Naive thymus-derived CD4-positive, alpha-beta T cell (primary cell): ENCODE measurements at regions of chr6 and their contacts with region 1.

Region 1: DNA sequence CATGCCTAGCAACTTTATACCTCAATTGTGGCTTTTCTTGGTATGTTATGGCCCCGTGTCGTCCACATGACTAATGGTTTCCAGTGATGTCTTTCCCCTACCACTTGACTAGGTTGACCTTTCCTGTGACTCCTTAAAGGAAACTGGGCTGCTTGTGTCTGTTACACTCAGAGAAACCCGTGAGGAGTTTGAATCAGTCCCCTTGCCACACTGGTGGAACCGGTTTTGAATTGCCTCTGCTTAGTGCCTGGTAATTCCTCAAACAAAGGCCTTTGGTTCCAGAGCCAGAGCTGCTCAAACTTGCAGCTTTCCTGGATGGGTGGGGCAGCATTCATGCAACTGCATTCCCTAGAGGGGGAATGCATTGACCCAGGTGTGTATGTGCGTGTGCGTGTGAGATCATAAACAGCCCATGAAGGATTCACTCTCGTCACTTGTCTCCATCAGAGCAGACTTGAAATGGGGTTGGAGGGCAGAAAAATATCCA is 22.0 kb downstream of the ECT2L start:
- DNase-seq: peak in 1 of 9 donors; percentile 28
- ATAC-seq: no peak
- H3K4me3 ChIP-seq: no peak overlapping the region
- H3K4me3 Mint-ChIP-seq: no peak overlapping the region
- H3K27ac ChIP-seq: no peak overlapping the region
- H3K27ac Mint-ChIP-seq: peak overlapping the region in 1 of 9 donors; percentile 21
- H3K4me1 ChIP-seq: no peaks in the 10 kb centered on the region
- H3K4me1 Mint-ChIP-seq: peaks cover 0 to 30% (median 0%) of the 10 kb centered on the region in 7 donors
- H3K27me3 ChIP-seq: no peaks in the 10 kb centered on the region
- H3K27me3 Mint-ChIP-seq: no peaks in the 10 kb centered on the region

Region 2: DNA sequence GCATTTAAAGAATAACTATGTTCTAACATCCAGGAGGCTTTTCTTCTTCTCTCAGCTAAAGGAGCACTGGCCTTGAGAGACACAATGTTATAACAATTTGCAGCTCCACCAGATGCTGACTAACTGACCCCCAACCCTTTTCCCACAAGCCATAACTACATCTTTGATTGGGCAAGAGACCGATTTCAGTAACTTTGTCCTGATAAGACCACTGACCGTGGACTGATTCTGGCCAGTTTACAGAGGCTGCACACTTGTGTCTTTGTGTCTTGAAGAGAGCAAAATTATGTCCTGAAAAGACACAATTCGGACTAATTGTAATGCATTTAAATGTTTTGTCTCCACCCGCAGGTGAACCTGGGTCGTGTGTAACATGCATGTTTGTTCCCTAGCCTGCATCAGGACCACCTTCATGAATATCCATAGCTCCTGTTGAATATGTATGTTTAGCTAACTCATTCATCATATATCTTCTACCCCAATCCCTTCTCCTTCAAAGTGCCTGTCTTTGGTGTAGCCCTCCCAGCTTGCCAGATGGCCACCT is 233.0 kb after region 1 on chr6:
- CTCF ChIA-PET with region 1: no interaction called
- POLR2A ChIA-PET with region 1: no interaction called
- intact Hi-C with region 1: loop called in 1 of 2 experiments (anchors 1 kb)
- DNase-seq: no peak
- ATAC-seq: no peak
- H3K4me3 ChIP-seq: no peak overlapping the region
- H3K4me3 Mint-ChIP-seq: no peak overlapping the region
- H3K27ac ChIP-seq: no peak overlapping the region
- H3K27ac Mint-ChIP-seq: no peak overlapping the region
- H3K4me1 ChIP-seq: no peaks in the 10 kb centered on the region
- H3K4me1 Mint-ChIP-seq: peaks cover 0 to 16% (median 4%) of the 10 kb centered on the region in 7 donors
- H3K27me3 ChIP-seq: no peaks in the 10 kb centered on the region
- H3K27me3 Mint-ChIP-seq: peaks cover 0 to 7% (median 0%) of the 10 kb centered on the region in 5 donors

Region 3: GRCh38 chr6:139124887-139125672 is 307.2 kb after region 1 on chr6:
- CTCF ChIA-PET with region 1: no interaction called
- POLR2A ChIA-PET with region 1: no interaction called
- intact Hi-C with region 1: loop called (anchors 1 to 5 kb)
- DNase-seq: peak in 8 of 9 donors; percentile 65 to 90 (median 84)
- ATAC-seq: peak; percentile 99
- H3K4me3 ChIP-seq: peak overlapping the region; percentile 31
- H3K4me3 Mint-ChIP-seq: peak overlapping the region; percentile 25 to 86 (median 68)
- H3K27ac ChIP-seq: peak overlapping the region; percentile 60
- H3K27ac Mint-ChIP-seq: peak overlapping the region; percentile 86 to 97 (median 94)
- H3K4me1 ChIP-seq: peaks cover 28 to 38% of the 10 kb centered on the region in 2 donors
- H3K4me1 Mint-ChIP-seq: peaks cover 19 to 65% (median 60%) of the 10 kb centered on the region in 7 donors
- H3K27me3 ChIP-seq: no peaks in the 10 kb centered on the region
- H3K27me3 Mint-ChIP-seq: no peaks in the 10 kb centered on the region

Region 4: DNA sequence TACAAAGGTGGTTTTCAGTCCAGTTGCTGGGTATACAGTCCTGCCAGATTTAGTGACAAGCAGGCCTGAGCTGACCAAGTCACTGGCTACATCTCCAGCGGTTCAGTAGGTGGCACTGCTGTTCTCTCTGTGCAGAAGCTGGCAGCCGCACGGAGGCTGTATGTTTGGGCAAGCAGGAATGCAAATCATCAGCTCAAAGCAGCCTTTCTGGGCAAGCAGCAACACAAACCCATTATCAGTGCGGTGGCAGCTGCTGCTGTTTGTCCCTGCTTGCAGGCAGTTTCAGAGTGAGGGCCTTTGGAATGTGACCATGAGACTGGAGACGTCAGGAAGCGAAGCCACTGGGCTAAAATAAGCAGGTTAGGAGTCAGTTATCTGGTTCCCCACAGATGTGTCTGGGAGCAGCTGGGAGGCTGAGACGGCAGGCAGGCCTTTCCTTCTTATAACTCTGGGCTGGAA is 401.4 kb after region 1 on chr6:
- CTCF ChIA-PET with region 1: interaction called, 6 read pairs
- POLR2A ChIA-PET with region 1: interaction called, 3 read pairs
- intact Hi-C with region 1: loop called (anchors 1 kb)
- DNase-seq: peak; percentile 39 to 76 (median 60)
- ATAC-seq: peak; percentile 100
- H3K4me3 ChIP-seq: no peak overlapping the region
- H3K4me3 Mint-ChIP-seq: peak overlapping the region in 8 of 10 donors; percentile 41 to 68 (median 58)
- H3K27ac ChIP-seq: no peak overlapping the region
- H3K27ac Mint-ChIP-seq: peak overlapping the region; percentile 49 to 92 (median 78)
- H3K4me1 ChIP-seq: peaks cover 5 to 10% of the 10 kb centered on the region in 2 donors
- H3K4me1 Mint-ChIP-seq: peaks cover 6 to 20% (median 12%) of the 10 kb centered on the region in 7 donors
- H3K27me3 ChIP-seq: no peaks in the 10 kb centered on the region
- H3K27me3 Mint-ChIP-seq: no peaks in the 10 kb centered on the region

Region 5: DNA sequence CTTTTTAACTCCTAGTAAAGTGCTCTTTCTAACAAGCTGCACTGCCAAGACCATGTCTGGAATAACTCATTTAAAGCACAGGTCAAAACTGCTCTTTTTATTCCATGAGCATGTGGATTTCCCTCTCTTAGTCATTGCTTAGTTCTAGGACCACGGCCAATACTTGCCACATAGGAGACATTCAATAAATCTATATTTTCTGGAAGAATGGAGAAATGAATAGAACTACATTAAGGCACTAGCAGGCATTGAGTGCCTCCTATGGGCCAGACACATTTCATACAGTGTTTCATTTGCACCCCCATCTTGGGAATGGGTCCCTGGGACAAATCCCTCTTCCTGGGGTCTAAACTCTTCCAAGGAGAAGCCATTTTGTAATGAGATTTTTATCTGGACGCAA is 1109.4 kb after region 1 on chr6:
- CTCF ChIA-PET with region 1: no interaction called
- POLR2A ChIA-PET with region 1: no interaction called
- intact Hi-C with region 1: loop called in 1 of 2 experiments (anchors 1 kb)
- DNase-seq: no peak
- ATAC-seq: no peak
- H3K4me3 ChIP-seq: no peak overlapping the region
- H3K4me3 Mint-ChIP-seq: no peak overlapping the region
- H3K27ac ChIP-seq: no peak overlapping the region
- H3K27ac Mint-ChIP-seq: no peak overlapping the region
- H3K4me1 ChIP-seq: no peaks in the 10 kb centered on the region
- H3K4me1 Mint-ChIP-seq: no peaks in the 10 kb centered on the region
- H3K27me3 ChIP-seq: no peaks in the 10 kb centered on the region
- H3K27me3 Mint-ChIP-seq: peaks cover 0 to 21% (median 14%) of the 10 kb centered on the region in 5 donors